Activated CD4-positive, alpha-beta T cell treated with anti-CD3 and anti-CD28 coated beads for 36 hours (primary cell): ENCODE measurements at regions of chr13 and their contacts with region 1.

Region 1: DNA sequence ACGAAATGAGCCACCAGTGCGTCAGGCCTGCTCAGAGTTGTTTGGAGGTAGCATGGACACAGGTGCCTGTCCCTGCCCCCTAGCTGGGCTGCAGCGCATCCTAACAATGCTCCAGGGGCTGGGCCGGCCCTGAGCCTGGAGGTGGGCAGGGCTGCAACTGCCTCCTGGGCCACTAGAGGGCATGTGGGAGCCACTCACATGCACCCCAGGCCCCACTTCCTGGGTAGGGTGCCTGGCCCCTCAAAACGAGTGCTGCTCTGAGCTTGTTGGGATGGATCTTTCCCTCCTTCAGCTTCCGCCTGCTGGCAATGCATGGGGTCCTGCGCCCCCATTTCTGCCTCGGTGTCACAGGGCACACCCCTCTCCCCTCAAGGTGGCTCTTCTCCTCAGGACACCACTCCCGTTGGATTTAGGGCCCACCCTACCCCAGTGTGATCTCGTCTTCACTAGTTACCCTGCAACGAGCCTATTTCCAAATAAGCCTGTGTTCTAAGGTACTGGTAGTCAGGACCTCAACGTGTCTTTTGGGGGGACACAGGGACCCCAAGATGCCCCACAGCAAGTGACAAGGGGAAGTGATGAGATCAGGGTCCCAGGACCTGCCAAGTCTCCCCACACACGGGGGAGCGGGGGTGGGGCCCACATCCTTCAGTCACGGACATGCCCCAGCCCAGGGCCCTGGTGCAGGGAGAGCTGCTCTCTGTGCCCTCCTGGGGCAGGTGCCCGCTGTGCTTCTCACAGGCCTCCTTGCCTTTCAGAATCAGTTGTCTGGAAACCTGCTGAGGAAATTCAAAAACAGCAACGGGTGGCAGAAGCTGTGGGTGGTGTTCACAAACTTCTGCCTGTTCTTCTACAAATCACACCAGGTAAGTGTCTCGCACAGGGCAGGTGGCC is 131.3 kb downstream of the STK24 start:
- DNase-seq: peak; percentile 89
- ATAC-seq: peak; percentile 95
- H3K4me3 Mint-ChIP-seq: no peak overlapping the region
- H3K27ac Mint-ChIP-seq: peak overlapping the region; percentile 88
- H3K4me1 Mint-ChIP-seq: peaks cover 15% of the 10 kb centered on the region
- H3K27me3 Mint-ChIP-seq: no peaks in the 10 kb centered on the region

Region 2: DNA sequence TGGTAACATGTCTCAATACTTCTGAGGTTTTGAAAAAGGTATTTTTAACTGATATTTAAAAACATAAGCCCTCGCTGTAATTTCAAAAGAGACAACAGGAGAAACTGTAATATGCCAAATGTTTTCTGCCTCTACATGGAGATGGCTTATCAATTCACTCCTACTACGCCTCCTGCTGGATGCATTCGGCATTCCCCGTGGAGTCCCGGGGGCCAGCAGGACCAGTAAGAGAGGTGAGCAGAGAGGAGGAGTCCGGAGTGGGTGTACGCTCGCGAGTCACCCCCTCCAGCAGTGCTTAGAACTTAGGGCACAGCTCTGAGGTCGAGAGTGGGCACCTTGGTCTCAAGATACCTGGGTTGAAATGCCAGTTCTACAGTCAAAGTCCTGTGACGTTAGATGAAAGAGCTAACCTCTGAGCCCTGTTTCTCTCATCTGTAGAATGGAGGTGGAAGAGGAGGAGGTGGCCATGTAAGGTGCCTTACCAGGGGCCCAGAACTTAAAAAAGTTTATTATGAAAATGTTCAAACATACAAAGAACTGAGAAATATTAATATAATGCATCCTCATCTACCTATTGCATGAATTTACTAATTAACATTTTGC is 21.1 kb after region 1 on chr13:
- CTCF ChIA-PET with region 1: interaction called, 15 read pairs
- POLR2A ChIA-PET with region 1: no interaction called
- intact Hi-C with region 1: no loop called
- DNase-seq: peak; percentile 73
- ATAC-seq: peak; percentile 77
- H3K4me3 Mint-ChIP-seq: no peak overlapping the region
- H3K27ac Mint-ChIP-seq: no peak overlapping the region
- H3K4me1 Mint-ChIP-seq: peaks cover 19% of the 10 kb centered on the region
- H3K27me3 Mint-ChIP-seq: no peaks in the 10 kb centered on the region

Region 3: DNA sequence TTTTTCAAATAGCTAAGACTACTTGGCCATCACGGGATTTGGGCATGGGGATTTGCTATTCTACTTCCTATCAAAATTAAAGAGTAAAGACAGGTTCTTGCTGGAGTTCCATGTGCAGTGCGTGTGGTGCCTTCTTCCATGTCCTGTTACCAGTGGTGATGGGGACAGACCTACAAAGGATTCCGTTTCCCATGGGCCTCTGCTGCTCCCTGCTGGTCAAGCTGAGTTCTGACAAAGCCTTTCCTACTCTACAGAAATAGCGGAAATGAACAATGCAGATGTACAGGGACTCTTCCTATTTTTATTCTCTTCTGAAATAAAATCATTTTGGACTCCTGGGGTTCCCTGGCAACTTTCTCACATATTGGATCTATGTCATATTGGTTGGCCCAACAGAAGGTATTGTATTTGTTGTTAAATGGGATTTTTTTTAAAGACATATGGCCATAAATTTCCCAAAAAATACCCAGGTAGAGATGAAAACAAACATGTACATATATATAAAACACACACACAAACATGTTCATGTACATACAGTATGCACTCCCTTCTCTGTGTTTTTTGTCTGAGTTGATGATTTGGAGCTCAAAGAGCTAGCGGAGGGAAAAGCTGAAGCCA is 397.4 kb after region 1 on chr13:
- CTCF ChIA-PET with region 1: interaction called, 3 read pairs
- POLR2A ChIA-PET with region 1: no interaction called
- intact Hi-C with region 1: loop called in 1 of 2 experiments (anchors 2 kb)
- DNase-seq: peak; percentile 86
- ATAC-seq: peak; percentile 88
- H3K4me3 Mint-ChIP-seq: no peak overlapping the region
- H3K27ac Mint-ChIP-seq: no peak overlapping the region
- H3K4me1 Mint-ChIP-seq: no peaks in the 10 kb centered on the region
- H3K27me3 Mint-ChIP-seq: no peaks in the 10 kb centered on the region